IMR-90 (cell line): ENCODE measurements at regions of chr12 and their contacts with region 1.

Region 1: GRCh38 chr12:42482445-42483237 is 106.9 kb downstream of the PRICKLE1 start:
- DNase-seq: peak; percentile 65
- ATAC-seq: peak; percentile 80
- H3K4me3 ChIP-seq: peak overlapping the region; percentile 91
- H3K27ac ChIP-seq: peak overlapping the region; percentile 91
- H3K4me1 ChIP-seq: peaks cover 7% of the 10 kb centered on the region
- H3K27me3 ChIP-seq: no peaks in the 10 kb centered on the region
- CTCF ChIP-seq: peak; percentile 93
- POLR2A ChIP-seq: no peak
- RAD21 ChIP-seq: peak; percentile 82

Region 2: GRCh38 chr12:42568952-42569915 is 86.6 kb after region 1 on chr12:
- CTCF ChIA-PET with region 1: interaction called, 22 read pairs
- POLR2A ChIA-PET with region 1: interaction called, 4 read pairs
- dilution Hi-C with region 1: no loop called
- in situ Hi-C with region 1: no loop called
- intact Hi-C with region 1: loop called (anchors 1 kb)
- DNase-seq: peak; percentile 80
- ATAC-seq: peak; percentile 25; the same call in 1 of the 2 replicates
- H3K4me3 ChIP-seq: no peak overlapping the region
- H3K27ac ChIP-seq: no peak overlapping the region
- H3K4me1 ChIP-seq: peaks cover 20% of the 10 kb centered on the region
- H3K27me3 ChIP-seq: no peaks in the 10 kb centered on the region
- CTCF ChIP-seq: peak; percentile 69
- POLR2A ChIP-seq: no peak
- RAD21 ChIP-seq: peak; percentile 60

Region 3: GRCh38 chr12:42589465-42590329 is 107.1 kb after region 1 on chr12 and contains the start of gene PRICKLE1:
- CTCF ChIA-PET with region 1: interaction called, 3 read pairs
- POLR2A ChIA-PET with region 1: no interaction called
- dilution Hi-C with region 1: no loop called
- in situ Hi-C with region 1: no loop called
- intact Hi-C with region 1: loop called (anchors 5 kb)
- DNase-seq: peak; percentile 60
- ATAC-seq: peak; percentile 88
- H3K4me3 ChIP-seq: peak within 1 kb of the TSS; percentile 89
- H3K27ac ChIP-seq: peak within 1 kb of the TSS; percentile 58
- H3K4me1 ChIP-seq: peaks cover 17% of the 10 kb centered on the region
- H3K27me3 ChIP-seq: peaks cover 14% of the 10 kb centered on the region
- CTCF ChIP-seq: no peak
- POLR2A ChIP-seq: no peak
- RAD21 ChIP-seq: no peak; the same call in 1 of the 2 replicates
- total RNA-seq, gene PRICKLE1: 20.8 and 21.3 TPM in 2 replicates

Region 4: DNA sequence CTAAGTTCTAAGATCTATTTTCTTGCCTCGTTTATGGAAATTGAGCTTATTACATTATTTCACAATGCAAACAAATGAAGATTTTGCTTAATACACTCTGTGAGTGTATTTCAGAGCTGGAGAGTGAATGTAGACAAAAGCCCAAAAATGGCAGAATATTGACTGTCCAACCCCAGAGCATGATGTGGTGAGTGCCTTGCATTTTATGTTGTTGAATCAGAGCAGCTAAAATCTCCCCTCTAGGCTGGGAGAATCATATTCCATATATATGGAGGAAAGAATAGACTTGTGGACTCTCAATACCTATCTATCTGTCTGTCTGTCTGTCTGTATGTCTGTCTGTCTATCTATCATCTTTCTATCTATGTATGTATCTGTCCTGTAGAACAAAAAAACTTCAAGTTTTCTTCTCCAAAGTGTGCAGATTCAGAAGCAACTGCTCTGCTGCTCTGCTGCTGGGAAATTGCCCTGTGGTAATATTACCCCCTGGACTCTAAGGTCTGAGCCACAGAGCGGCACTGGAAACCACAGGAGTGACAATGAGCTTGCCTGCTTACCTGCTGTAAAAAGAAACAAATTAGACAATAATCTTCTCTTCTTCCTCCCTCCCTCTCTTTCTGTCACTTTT is 316.3 kb after region 1 on chr12:
- CTCF ChIA-PET with region 1: no interaction called
- POLR2A ChIA-PET with region 1: no interaction called
- dilution Hi-C with region 1: no loop called
- in situ Hi-C with region 1: no loop called
- intact Hi-C with region 1: loop called (anchors 5 kb)
- DNase-seq: peak; percentile 76
- ATAC-seq: peak; percentile 82
- H3K4me3 ChIP-seq: no peak overlapping the region
- H3K27ac ChIP-seq: peak overlapping the region; percentile 67
- H3K4me1 ChIP-seq: peaks cover 15% of the 10 kb centered on the region
- H3K27me3 ChIP-seq: no peaks in the 10 kb centered on the region
- CTCF ChIP-seq: no peak
- POLR2A ChIP-seq: no peak
- RAD21 ChIP-seq: no peak